GM13976 (cell line): ENCODE measurements at regions of chr1 and their contacts with region 1.

Region 1: DNA sequence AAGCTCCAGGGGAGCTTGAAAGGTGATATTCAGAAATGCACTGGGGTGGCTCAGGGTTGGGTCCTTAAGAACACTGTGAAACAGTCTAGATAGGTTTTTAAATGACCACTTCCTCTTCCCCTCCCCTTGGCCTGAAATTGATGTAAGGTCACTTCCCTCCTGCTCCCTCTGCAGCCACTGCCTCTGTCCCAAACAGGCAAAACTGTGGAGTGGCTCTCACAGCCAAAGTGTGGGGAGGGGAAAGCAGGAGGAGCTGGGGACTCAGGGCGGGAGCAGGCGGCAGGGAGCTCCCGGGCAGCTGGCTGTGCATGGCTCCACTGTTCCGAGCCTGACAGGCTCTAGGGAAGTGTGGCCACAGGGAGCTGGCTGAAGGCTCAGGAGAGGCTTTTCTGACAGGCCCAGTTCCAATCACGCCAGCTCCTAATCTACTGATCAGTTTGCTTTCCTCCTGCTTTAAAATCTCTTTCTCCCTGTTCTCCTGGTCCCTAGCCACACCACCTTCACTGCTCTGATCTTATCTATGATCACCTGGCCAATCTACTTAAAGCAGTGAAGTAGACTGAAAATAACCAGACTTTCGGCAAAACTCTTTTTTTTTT is 5.1 kb upstream of the CSRP1 start:
- DNase-seq: peak; percentile 68
- CTCF ChIP-seq: no peak

Region 2: DNA sequence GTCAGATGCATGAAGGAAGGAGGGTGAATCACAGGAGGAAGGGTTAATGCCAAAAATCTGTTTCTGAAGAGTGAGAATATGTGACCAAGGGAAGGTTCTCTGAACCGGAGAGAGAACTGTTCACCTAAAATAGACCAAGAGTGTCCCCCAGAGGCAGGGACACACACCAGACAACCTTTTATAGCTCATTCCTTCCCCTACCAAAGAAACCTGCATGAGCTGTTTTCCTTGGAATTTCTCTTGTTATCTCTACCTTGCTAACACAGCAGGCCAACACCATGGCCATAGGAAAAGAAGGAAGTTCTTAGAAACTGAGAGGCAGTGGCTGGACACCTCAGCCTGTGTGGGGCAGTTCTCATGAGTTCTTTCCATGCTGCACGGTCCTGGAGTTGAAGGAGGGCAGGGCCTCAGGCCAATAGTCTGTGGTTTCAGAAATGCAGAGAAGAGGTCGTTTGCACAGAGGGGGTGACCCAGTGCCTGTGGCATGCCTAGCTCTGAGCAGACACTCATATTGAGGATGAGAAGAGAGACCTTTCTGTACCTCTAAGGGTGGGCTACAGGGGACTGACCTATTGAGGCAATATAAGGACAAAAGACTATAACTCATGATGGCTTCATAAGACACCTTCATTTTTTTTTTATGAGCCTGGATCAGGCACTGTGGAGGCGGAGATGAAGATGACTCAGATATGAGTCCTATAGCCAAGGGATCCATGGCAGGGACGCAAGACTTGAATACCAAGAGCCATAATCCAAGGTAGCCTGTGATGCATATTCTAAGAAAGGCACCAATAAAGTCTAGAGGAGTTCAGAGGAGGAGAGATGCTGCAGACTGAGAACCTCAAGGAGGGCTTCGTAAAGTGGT is 282.0 kb before region 1 on chr1:
- in situ Hi-C with region 1: no loop called
- DNase-seq: no peak
- CTCF ChIP-seq: no peak

Region 3: DNA sequence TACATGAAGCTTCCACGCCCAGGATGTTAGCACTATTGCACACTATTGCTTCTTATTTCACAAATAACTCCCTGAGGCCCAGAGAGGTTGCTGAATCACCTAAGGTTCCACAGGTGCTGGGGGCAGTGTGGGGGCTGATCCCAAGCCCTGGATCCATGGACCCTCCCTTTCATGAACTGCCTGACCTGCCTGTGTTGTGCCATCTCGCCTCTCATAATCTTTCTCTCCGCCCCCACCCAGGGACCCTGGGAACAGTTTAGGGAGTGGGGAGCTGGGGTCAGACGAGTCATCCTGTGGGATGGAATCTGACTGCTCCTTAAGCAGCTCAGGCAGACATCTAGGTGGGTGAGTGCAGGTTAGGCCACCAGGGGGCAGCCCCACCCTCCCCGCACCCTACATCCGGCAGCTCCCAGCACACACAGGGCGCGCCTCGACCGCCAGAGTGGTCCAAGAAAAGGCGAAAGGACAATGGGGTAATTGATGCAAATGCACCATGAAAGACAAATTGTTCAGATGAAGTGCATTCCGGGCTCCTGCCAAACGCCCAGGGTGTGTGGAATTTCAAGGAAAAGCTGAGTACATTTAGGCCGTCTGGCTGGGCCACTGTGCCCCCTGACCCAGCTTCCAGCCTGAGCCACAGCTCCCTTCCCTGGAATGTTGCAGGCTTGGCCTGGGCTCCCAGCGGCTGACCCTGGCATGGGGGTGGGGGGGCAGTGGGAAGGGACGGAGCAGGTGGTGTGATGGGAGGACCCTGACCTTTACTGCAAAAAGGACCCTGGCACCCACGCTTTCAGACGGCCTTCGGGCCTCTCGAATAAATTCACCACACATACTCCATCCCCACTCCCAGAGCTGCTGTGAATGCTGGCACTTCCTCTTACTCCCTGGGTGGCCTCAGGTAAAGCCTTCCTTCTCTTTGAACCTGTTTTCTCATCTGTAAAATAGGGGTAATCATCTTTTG is 63.8 kb before region 1 on chr1:
- in situ Hi-C with region 1: loop called (anchors 10 kb)
- DNase-seq: peak; percentile 88
- CTCF ChIP-seq: peak; percentile 90